ENCODE measurements at regions of chr5 and their contacts with region 1.

Region 1: GRCh38 chr5:139439013-139439903 is at the start of gene DNAJC18:
- DNase-seq: peak; percentile 71 to 90 (median 85)
- ATAC-seq: peak; percentile 96
- H3K4me3 ChIP-seq: peak within 1 kb of the TSS; percentile 86
- H3K4me3 Mint-ChIP-seq: peak within 1 kb of the TSS; percentile 84 to 99 (median 98)
- H3K27ac ChIP-seq: peak within 1 kb of the TSS; percentile 100
- H3K27ac Mint-ChIP-seq: peak within 1 kb of the TSS; percentile 96 to 100 (median 99)
- H3K4me1 ChIP-seq: peaks cover 15 to 26% of the 10 kb centered on the region in 2 donors
- H3K4me1 Mint-ChIP-seq: peaks cover 23 to 64% (median 45%) of the 10 kb centered on the region in 7 donors
- H3K27me3 ChIP-seq: no peaks in the 10 kb centered on the region
- H3K27me3 Mint-ChIP-seq: no peaks in the 10 kb centered on the region
- total RNA-seq, gene DNAJC18: 2.2 to 9.7 (median 4.9) TPM

Region 2: DNA sequence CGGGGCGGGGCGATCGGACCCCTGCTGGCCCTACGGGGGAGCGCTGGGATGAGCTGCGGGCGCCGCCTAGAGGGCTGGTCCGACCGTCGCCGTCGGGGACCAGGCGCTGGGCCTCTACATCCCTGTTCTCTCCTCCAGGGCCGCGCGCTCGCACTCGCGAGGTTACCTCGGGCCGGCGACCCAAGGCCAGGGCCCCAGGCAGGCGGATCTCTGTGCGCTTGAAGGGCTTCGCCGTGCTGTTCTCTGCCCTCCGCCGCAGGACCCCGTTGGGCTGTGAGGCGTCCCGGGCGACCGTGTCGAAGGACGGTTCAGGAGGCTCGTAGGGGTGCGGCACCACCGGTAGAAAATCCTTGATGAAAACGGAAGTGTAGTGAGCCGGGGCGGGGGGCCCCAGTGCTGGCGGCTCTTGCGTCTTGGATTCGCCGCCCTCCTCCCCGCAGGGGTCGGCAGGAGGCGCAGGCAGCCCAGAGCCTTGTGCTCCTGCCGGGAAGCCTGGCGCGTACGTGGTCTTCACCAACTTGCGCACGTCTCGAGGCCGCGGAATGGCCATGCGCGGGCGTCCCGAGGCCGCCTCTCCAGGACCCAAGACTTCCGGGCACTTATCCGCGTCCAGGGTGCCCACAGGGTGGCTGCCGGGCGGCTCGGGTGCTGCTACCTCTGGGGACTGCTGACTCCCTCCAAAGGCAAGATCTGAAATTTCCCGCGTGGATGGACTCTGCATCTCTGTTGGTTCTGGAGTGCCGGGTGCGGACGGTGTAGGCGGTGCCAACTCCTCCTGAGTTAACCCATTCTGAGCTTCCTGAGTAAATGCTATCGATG is 46.4 kb before region 1 on chr5:
- CTCF ChIA-PET with region 1: no interaction called
- POLR2A ChIA-PET with region 1: no interaction called
- intact Hi-C with region 1: loop called in 1 of 2 experiments (anchors 2 kb)
- DNase-seq: peak; percentile 39 to 87 (median 60)
- ATAC-seq: peak; percentile 82
- H3K4me3 ChIP-seq: peak overlapping the region; percentile 76
- H3K4me3 Mint-ChIP-seq: peak overlapping the region; percentile 87 to 97 (median 90)
- H3K27ac ChIP-seq: peak overlapping the region; percentile 17
- H3K27ac Mint-ChIP-seq: peak overlapping the region in 6 of 9 donors; percentile 7 to 97 (median 59)
- H3K4me1 ChIP-seq: peaks cover 5 to 34% of the 10 kb centered on the region in 2 donors
- H3K4me1 Mint-ChIP-seq: peaks cover 12 to 61% (median 23%) of the 10 kb centered on the region in 7 donors
- H3K27me3 ChIP-seq: no peaks in the 10 kb centered on the region
- H3K27me3 Mint-ChIP-seq: no peaks in the 10 kb centered on the region

Region 3: GRCh38 chr5:139458580-139459406 is 19.5 kb after region 1 on chr5:
- CTCF ChIA-PET with region 1: interaction called, 3 read pairs
- POLR2A ChIA-PET with region 1: interaction called, 23 read pairs
- intact Hi-C with region 1: loop called (anchors 1 kb)
- DNase-seq: peak in 8 of 9 donors; percentile 71 to 89 (median 85)
- ATAC-seq: peak; percentile 98
- H3K4me3 ChIP-seq: peak overlapping the region; percentile 10
- H3K4me3 Mint-ChIP-seq: peak overlapping the region; percentile 38 to 86 (median 64)
- H3K27ac ChIP-seq: peak overlapping the region; percentile 73
- H3K27ac Mint-ChIP-seq: peak overlapping the region; percentile 89 to 98 (median 94)
- H3K4me1 ChIP-seq: peaks cover 35 to 49% of the 10 kb centered on the region in 2 donors
- H3K4me1 Mint-ChIP-seq: peaks cover 33 to 72% (median 64%) of the 10 kb centered on the region in 7 donors
- H3K27me3 ChIP-seq: no peaks in the 10 kb centered on the region
- H3K27me3 Mint-ChIP-seq: no peaks in the 10 kb centered on the region

Region 4: GRCh38 chr5:139474890-139475791 is 35.9 kb after region 1 on chr5:
- CTCF ChIA-PET with region 1: interaction called, 7 read pairs
- POLR2A ChIA-PET with region 1: interaction called, 54 read pairs
- intact Hi-C with region 1: loop called in 1 of 2 experiments (anchors 1 kb)
- DNase-seq: peak in 4 of 9 donors; percentile 40 to 48 (median 44)
- ATAC-seq: peak; percentile 74
- H3K4me3 ChIP-seq: peak overlapping the region; percentile 42
- H3K4me3 Mint-ChIP-seq: peak overlapping the region; percentile 49 to 97 (median 68)
- H3K27ac ChIP-seq: peak overlapping the region; percentile 64
- H3K27ac Mint-ChIP-seq: peak overlapping the region; percentile 30 to 98 (median 88)
- H3K4me1 ChIP-seq: peaks cover 37 to 76% of the 10 kb centered on the region in 2 donors
- H3K4me1 Mint-ChIP-seq: peaks cover 60 to 92% (median 80%) of the 10 kb centered on the region in 7 donors
- H3K27me3 ChIP-seq: no peaks in the 10 kb centered on the region
- H3K27me3 Mint-ChIP-seq: no peaks in the 10 kb centered on the region

Region 5: GRCh38 chr5:139745800-139746690 is 306.8 kb after region 1 on chr5:
- CTCF ChIA-PET with region 1: no interaction called
- POLR2A ChIA-PET with region 1: no interaction called
- intact Hi-C with region 1: loop called in 1 of 2 experiments (anchors 5 kb)
- DNase-seq: peak; percentile 31 to 64 (median 41)
- ATAC-seq: peak; percentile 68
- H3K4me3 ChIP-seq: peak overlapping the region; percentile 79
- H3K4me3 Mint-ChIP-seq: peak overlapping the region; percentile 88 to 100 (median 91)
- H3K27ac ChIP-seq: no peak overlapping the region
- H3K27ac Mint-ChIP-seq: peak overlapping the region in 4 of 9 donors; percentile 13 to 82 (median 52)
- H3K4me1 ChIP-seq: peaks cover 7 to 8% of the 10 kb centered on the region in 2 donors
- H3K4me1 Mint-ChIP-seq: peaks cover 18 to 25% (median 23%) of the 10 kb centered on the region in 7 donors
- H3K27me3 ChIP-seq: no peaks in the 10 kb centered on the region
- H3K27me3 Mint-ChIP-seq: peaks cover 7 to 67% (median 15%) of the 10 kb centered on the region in 5 donors

Measured in naive thymus-derived CD4-positive, alpha-beta T cell (primary cell).